ENCODE measurements at regions of chr4 and their contacts with region 1.

Region 1: DNA sequence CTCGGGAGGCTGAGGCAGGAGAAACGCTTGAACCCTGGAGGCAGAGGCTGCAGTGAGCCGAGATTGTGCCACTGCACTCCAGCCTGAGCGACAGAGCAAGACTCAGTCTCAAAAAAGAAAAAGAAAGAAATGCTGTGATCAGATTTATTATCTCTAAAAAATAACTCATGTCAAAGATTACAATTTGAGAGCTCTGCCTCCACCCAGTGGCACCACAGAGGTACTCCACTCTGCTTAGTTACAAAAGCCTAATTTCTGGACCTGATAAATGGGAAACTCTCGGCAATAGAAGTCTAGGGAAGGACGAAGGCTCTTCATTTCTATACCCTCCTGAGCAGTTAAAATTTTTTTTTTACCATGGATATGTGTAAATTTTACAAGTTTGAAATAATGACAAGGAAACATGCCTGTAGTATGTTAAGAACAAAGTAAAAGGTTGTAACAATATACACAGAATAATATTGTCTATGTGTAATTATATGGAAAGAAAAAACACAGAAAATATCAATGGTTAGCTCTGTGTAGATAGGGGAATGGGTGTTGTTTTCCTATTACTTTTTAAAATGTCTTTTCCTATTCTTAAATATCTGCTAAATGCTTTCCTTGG is 149.8 kb downstream of the STIM2 start:
- DNase-seq: peak; percentile 75
- ATAC-seq: peak; percentile 72
- H3K4me3 ChIP-seq: no peak overlapping the region
- H3K27ac ChIP-seq: peak overlapping the region; percentile 48; the same call in 1 of the 2 replicates
- H3K4me1 ChIP-seq: peaks cover 10% of the 10 kb centered on the region
- H3K27me3 ChIP-seq: no peaks in the 10 kb centered on the region
- CTCF ChIP-seq: peak; percentile 82
- POLR2A ChIP-seq: no peak
- RAD21 ChIP-seq: peak; percentile 87

Region 2: DNA sequence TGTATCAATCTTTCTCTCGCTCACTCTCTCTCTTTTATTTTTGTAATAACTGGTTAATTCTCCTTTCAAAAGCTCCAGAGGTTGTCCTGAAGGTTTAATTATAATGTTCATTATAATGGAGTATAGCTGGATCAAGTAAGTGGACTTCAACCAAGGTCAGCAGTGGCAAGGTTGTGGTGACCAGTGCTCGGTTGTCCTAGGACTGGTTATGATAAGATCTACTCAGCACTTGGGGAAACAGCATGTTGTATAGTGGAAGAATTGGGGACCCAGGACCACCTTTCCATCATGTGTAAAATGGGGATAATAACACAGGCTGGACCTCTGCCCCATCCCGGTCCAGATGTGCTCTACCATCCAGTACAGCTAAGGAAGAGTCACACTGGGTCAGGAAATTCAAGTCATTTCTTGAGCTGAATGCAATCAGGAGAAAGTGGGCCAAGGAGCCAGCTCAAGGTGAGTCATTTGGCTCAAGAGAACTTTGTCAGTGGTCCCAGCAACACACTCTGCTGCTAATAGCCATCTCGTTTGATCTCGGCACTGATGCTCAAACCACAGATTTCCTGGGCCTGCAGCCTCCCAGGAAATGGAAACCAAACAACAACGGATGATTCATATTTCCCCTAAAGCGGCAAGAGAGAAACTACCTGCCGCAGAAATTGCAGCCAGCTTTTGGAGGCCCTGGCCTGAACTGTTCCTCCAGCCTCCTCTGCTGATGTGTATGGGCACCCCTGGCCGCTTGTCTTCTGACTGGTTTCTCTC is 813.2 kb before region 1 on chr4:
- CTCF ChIA-PET with region 1: no interaction called
- POLR2A ChIA-PET with region 1: no interaction called
- dilution Hi-C with region 1: no loop called
- in situ Hi-C with region 1: loop called (anchors 25 kb)
- intact Hi-C with region 1: no loop called
- DNase-seq: peak; percentile 97
- ATAC-seq: peak; percentile 86
- H3K4me3 ChIP-seq: no peak overlapping the region
- H3K27ac ChIP-seq: peak overlapping the region; percentile 31
- H3K4me1 ChIP-seq: peaks cover 6% of the 10 kb centered on the region
- H3K27me3 ChIP-seq: no peaks in the 10 kb centered on the region
- CTCF ChIP-seq: no peak
- POLR2A ChIP-seq: no peak
- RAD21 ChIP-seq: no peak

Region 3: DNA sequence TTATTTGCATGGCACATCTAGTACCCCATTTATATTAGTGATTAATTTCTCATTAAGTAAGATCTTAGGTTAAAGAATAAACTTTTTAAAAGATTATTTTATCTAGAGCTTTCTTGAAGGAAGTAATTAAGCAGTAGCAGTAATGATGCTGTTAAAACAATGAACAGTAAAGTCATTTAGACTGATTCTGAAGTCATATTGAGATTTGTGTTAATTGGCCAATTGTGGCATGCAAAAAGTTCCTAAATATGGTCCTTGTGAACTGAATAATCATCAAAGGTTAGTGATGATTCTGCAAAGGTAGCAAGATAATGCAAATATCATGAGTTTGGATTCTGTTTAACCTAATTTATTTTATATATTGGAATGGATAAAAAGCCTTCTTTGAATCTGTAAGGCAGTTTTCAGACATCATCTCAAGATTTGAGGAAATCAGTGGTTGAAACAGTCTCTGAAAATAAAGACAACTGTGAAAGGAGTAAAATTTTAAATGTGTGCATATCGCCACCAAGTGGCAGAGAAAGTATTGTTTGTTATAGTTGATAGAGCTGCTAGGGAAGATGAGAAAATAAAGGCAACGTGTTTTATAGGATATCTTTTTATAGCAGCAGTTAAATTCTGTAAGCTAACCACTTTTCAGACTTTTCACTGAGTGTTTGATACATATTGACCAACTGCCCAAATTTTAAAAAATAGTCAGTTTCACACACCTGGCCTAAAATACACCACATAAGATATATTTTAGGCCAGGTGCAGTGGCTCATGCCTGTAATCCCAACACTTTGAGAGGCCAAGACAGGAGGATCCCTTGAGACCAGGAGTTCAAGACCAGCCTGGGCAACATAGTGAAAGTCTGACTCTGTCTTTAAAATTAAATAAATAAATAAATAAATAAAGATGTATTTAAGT is 599.8 kb before region 1 on chr4:
- CTCF ChIA-PET with region 1: no interaction called
- POLR2A ChIA-PET with region 1: no interaction called
- dilution Hi-C with region 1: no loop called
- in situ Hi-C with region 1: no loop called
- intact Hi-C with region 1: loop called (anchors 2 kb)
- DNase-seq: peak; percentile 63
- ATAC-seq: peak; percentile 68
- H3K4me3 ChIP-seq: no peak overlapping the region
- H3K27ac ChIP-seq: no peak overlapping the region
- H3K4me1 ChIP-seq: peaks cover 10% of the 10 kb centered on the region
- H3K27me3 ChIP-seq: no peaks in the 10 kb centered on the region
- CTCF ChIP-seq: peak; percentile 75
- POLR2A ChIP-seq: no peak
- RAD21 ChIP-seq: peak; percentile 69

Region 4: DNA sequence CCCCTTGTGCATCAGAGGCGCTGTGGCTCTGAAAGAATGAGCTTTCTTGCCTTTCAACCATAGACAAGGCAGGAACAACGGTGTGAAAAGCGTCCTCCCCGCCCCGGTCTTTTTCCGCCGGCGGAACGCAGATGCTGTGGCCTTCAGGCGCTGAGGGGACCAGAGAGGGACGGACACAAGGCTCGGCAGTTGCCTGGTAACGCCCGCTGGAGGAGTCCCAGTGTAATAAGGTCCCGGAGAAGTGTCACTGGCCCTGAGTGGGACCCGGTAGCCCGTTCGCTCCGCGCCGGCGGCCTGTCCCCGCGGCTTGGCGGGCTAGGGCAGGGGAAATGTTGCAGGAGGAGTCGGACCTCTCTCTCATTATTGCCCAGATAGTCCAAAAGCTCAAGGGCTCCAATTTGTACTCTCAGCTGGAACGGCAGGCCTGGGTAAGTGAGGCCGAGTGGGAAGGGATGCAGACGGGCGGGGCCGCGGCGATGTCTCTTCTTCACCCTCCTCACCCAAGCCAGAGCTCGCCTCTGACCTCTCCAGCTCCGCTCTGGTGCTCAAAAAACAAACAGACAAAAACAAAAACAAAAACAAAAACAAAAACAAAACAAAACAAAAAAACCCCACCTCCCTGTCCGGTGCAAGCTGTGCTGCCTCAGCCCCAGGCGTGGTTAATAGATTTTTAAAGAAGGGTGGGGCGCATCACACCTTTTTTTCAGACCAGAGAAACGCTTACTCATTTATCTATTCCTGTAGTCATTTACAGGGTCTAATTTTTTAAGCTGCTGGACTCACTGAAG is 426.4 kb before region 1 on chr4 and contains the start of gene TBC1D19:
- CTCF ChIA-PET with region 1: no interaction called
- POLR2A ChIA-PET with region 1: no interaction called
- dilution Hi-C with region 1: no loop called
- in situ Hi-C with region 1: no loop called
- intact Hi-C with region 1: loop called (anchors 5 kb)
- DNase-seq: peak; percentile 85
- ATAC-seq: peak; percentile 99
- H3K4me3 ChIP-seq: peak within 1 kb of the TSS; percentile 76
- H3K27ac ChIP-seq: peak within 1 kb of the TSS; percentile 69
- H3K4me1 ChIP-seq: no peaks in the 10 kb centered on the region
- H3K27me3 ChIP-seq: no peaks in the 10 kb centered on the region
- CTCF ChIP-seq: peak; percentile 4; the same call in 1 of the 2 replicates
- POLR2A ChIP-seq: no peak
- RAD21 ChIP-seq: peak; percentile 33
- total RNA-seq, gene TBC1D19: 17.6 and 31.4 TPM in 2 replicates

Region 5: DNA sequence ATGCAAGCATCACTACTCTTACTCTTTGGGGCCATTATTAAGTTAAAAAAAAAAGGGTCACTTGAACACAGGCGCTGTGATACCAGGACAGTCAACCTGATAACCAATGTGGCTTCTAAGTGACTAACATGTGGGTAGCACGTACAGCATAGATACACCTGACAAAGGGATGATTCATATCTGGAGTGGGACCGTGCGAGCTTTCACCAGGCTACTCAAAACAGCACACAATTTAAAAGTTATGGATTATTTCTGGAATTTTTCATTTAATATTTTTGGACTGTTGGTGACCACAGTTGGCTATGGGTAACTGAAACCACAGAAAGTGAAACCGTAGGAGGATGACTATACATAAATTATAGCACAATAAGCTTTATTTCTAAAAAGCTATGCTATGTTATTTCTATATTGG is 263.6 kb before region 1 on chr4:
- CTCF ChIA-PET with region 1: no interaction called
- POLR2A ChIA-PET with region 1: no interaction called
- dilution Hi-C with region 1: no loop called
- in situ Hi-C with region 1: loop called (anchors 25 kb)
- intact Hi-C with region 1: no loop called
- DNase-seq: no peak
- ATAC-seq: no peak
- H3K4me3 ChIP-seq: no peak overlapping the region
- H3K27ac ChIP-seq: no peak overlapping the region
- H3K4me1 ChIP-seq: no peaks in the 10 kb centered on the region
- H3K27me3 ChIP-seq: no peaks in the 10 kb centered on the region
- CTCF ChIP-seq: no peak
- POLR2A ChIP-seq: no peak
- RAD21 ChIP-seq: no peak